ENCODE measurements at regions of chr17 and their contacts with region 1.

Region 1: DNA sequence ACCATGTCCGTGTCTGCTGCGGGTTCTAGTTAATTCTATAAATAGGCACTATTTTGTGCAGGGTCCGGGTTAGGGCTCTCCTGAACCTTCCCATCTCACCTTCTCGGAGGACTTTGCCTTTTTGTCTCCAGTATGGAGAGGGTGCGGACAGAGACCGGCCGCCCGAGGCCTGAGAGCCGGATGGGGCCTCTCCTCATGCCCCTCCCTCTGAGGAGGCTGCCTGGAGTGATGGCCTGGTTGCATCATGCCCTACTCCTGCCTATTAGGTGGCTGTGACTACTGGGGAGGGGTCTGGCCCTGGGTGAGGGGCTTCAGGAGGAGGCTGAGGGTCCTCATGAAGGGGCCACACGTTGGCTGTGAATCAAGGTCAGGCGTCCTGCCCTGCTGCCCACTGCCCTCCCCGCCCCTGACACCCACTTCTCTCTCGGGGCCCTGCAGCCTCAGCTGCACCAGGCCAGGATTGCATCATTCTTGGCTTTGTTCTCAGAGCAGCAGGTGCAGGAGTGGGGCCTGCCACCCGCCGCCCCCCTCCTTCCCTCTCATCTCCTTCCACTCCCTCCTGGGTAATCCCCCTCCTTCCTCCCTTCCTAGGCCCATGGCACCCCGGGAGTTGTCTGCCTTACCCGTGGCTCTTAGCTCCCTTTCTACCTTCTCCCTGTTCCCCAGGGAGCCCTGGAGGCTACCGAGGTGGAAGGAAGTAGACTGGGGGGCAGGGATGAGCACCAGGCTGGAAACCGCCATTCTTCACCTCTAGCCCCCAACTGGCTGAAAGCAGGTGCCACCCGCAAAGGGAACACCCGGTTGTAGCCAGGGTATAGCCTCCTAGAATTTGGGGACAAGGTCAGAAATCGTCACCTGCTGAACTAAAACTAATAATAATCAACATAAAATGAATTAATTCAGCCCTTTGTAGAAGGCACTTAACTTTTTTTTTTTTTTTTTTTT is 12.7 kb upstream of the ARHGAP23 start:
- DNase-seq: no peak
- H3K4me3 ChIP-seq: peak overlapping the region; percentile 32
- H3K27me3 ChIP-seq: peaks cover 25% of the 10 kb centered on the region
- CTCF ChIP-seq: no peak

Region 2: GRCh38 chr17:38403491-38403890 is 12.0 kb before region 1 on chr17:
- CTCF ChIA-PET with region 1: interaction called, 14 read pairs
- POLR2A ChIA-PET with region 1: no interaction called
- DNase-seq: no peak
- H3K4me3 ChIP-seq: no peak overlapping the region
- H3K27me3 ChIP-seq: no peaks in the 10 kb centered on the region
- CTCF ChIP-seq: no peak

Region 3: GRCh38 chr17:38598536-38598935 is 183.0 kb after region 1 on chr17:
- CTCF ChIA-PET with region 1: no interaction called
- POLR2A ChIA-PET with region 1: interaction called, 12 read pairs
- DNase-seq: no peak
- H3K4me3 ChIP-seq: no peak overlapping the region
- H3K27me3 ChIP-seq: peaks cover 53% of the 10 kb centered on the region
- CTCF ChIP-seq: no peak